Activated CD8-positive, alpha-beta T cell treated with anti-CD3 and anti-CD28 coated beads, Interleukin-2, amount 10 ng/mL, durations not matched to agents 7 days and 5 days (primary cell): ENCODE measurements at regions of chr11 and their contacts with region 1.

Region 1: GRCh38 chr11:73350908-73351636 is 25.1 kb upstream of the RELT start:
- DNase-seq: peak; percentile 73
- ATAC-seq: peak; percentile 66
- H3K4me3 Mint-ChIP-seq: no peak overlapping the region
- H3K27ac Mint-ChIP-seq: no peak overlapping the region
- H3K4me1 Mint-ChIP-seq: peaks cover 14% of the 10 kb centered on the region
- H3K27me3 Mint-ChIP-seq: peaks cover 2% of the 10 kb centered on the region

Region 2: DNA sequence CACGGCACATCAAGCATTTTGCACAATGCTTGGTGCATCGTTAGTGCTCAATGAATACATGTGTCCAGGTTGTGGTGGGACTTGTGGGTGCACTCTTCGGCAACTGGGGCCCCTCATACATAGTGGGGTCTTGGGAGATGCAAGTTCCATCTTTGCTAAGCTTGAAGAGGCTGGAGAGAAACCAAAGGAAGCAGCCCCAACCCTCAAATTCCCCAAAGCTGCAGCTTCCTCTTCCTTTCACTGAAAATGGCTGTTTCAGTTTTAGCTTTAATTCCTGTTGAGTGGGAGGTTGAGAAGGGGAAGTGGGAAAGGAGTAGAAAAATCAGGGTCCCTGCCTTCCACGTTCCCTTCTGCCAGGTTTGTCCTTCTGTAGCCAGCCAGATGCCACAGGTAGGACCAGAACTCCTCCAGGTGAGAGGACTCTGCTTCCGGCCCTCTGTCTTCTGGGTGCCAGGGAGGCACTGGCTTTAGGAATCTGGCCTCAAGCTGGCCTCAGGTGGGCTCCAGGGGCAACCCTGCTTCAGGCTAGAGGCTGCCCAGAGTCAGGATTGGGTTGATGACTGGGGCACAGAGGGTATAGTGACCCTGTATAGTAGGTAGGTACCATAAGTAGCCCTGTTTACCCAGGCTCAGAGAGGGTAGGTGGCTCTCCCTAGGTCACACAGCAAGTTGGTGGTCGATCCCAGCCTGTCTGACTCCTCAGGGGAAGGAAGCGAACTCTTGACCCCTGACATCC is 62.8 kb before region 1 on chr11:
- CTCF ChIA-PET with region 1: no interaction called
- POLR2A ChIA-PET with region 1: no interaction called
- DNase-seq: no peak
- ATAC-seq: no peak
- H3K4me3 Mint-ChIP-seq: no peak overlapping the region
- H3K27ac Mint-ChIP-seq: peak overlapping the region; percentile 12
- H3K4me1 Mint-ChIP-seq: peaks cover 23% of the 10 kb centered on the region
- H3K27me3 Mint-ChIP-seq: peaks cover 8% of the 10 kb centered on the region

Region 3: DNA sequence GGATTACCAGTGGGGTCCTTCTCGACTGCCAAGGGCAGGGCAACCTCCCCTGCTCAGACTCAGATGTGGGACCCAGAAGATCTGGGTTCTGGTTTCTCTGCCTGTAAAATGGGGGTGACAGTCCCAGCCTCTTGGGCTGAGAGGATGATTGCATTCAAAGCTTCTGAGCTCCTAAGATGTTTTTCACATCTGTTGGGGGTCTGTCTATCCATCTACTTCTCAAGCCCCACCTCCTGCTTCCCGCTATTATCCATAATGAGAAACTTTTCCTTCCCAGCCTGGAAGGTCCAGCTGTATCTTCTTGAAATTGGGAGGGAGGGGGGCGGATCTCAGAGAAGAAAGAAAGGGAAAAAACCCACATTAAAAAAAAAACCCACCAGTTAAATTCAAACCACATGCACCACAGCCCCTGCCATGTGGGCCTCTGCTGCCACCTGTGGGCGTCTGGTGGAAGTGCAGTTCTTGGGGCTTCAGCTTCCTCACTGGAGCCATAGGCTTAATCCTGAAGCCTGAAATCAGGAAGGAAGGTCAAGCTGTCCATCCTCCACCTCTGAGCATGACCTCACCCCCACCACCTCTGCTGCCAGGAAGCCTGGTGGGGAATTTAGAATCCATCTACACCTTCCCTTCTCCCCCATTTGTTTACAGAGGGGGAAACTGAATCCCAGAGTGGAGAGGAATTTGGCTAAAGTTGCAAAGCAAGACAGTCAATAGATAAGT is 15.7 kb before region 1 on chr11:
- CTCF ChIA-PET with region 1: interaction called, 62 read pairs
- POLR2A ChIA-PET with region 1: no interaction called
- DNase-seq: peak; percentile 82
- ATAC-seq: peak; percentile 63
- H3K4me3 Mint-ChIP-seq: no peak overlapping the region
- H3K27ac Mint-ChIP-seq: no peak overlapping the region
- H3K4me1 Mint-ChIP-seq: peaks cover 11% of the 10 kb centered on the region
- H3K27me3 Mint-ChIP-seq: peaks cover under 1% of the 10 kb centered on the region

Region 4: DNA sequence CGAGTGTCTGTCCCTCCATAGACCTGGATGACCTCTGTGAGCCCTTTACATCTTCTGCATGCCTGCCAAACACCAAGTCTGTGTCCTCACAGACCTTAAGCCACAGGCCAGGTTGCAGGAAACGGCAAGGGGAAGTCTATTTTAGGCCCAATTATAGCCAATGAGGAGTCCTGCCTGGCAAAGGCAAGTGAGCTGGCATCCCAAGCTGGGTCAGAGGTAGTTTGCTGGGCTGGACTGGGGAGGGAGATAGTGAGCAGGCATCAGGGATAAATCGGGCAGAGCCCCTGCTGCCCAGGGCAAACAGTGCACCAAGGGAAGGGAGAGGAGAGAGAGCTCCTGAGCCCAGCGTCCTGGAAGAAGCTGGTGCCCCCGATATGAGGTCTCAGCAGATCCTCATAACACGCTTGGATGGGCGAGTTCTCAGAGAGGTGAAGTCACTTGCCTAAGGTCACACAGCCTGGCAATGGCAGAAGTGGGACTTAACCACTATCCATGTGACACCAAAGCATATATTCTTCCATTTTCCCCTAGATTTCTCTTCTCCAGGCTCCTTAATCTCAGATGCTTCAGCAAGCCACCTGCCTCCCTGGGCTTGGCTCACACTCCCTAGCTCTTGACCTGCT is 21.4 kb after region 1 on chr11:
- CTCF ChIA-PET with region 1: interaction called, 59 read pairs
- POLR2A ChIA-PET with region 1: interaction called, 5 read pairs
- DNase-seq: no peak
- ATAC-seq: no peak
- H3K4me3 Mint-ChIP-seq: no peak overlapping the region
- H3K27ac Mint-ChIP-seq: peak overlapping the region; percentile 58
- H3K4me1 Mint-ChIP-seq: peaks cover 36% of the 10 kb centered on the region
- H3K27me3 Mint-ChIP-seq: no peaks in the 10 kb centered on the region

Region 5: DNA sequence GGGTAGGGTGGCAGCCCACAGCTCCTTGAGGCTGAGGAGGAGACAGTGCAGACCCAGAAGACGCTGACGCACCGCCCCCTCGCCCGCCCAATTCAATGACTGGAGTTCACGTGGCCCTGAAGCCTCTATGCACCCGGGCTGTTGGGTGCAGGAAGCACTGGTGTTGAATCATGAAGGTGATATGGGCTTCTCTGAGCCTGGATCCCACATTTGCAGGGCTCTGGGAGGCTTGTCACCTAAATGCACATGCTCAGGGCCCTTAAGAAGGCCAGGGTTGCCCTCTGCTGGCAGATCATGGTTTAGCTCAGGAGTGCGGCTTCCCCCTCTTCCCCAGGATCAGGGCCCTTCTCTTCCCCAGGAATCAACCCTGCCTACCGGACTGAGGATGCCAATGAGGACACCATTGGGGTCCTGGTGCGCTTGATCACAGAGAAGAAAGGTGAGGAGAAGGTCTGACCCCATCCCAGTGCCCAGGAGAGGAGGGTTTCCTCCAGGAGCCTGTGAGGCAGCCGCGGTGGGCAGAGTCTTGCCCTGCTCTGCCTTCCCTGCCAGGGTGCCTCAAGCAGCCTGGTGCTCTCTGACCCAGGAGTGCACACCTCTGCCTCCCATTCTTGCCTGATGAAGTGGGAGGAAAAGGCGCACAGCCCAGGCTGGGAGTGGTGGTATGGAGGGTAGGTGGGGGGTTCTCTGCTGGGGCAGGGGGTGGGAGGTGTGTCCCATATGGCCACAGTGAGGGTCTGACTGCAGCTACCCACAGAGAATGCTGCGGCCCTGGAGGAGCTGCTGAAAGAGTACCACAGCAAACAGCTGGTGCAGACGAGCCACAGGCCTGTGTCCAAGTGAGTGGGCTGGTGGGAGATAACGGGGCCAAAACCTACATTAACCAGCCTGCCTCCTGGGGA is 42.7 kb after region 1 on chr11:
- CTCF ChIA-PET with region 1: interaction called, 101 read pairs
- POLR2A ChIA-PET with region 1: interaction called, 4 read pairs
- DNase-seq: peak; percentile 80
- ATAC-seq: peak; percentile 76
- H3K4me3 Mint-ChIP-seq: no peak overlapping the region
- H3K27ac Mint-ChIP-seq: peak overlapping the region; percentile 69
- H3K4me1 Mint-ChIP-seq: peaks cover 17% of the 10 kb centered on the region
- H3K27me3 Mint-ChIP-seq: no peaks in the 10 kb centered on the region

Region 6: DNA sequence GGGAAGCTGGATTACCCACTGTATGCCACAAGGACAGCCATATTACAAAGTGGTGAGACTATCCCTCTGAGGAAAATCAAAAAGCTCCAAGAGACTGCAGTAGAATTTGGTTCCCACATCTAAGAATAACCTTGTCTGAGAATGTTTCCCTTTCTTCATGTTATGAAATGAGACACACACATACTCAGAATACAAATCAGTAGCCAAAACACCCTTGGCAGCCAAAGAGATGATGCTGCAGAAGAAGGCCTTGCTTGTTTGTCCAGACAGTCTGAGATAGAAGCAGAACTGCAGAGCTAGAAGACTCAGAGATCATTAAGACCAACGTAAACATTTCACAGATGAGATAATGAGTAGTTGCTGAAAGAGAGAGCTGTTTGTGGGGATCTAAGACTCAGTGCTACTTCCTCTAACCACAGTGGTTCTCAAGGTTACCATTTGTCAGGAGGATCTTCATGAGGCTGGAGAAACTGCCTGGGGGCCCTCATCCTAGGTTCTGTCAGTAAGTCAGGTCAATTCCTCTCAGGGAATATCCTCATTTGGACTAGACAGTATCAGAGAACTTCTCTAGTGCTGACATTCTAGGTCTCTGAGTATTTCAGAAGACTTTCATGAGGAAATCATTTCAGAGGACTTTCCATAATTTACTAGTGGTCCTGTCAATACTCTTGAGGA is 64.0 kb after region 1 on chr11:
- CTCF ChIA-PET with region 1: interaction called, 17 read pairs
- POLR2A ChIA-PET with region 1: no interaction called
- DNase-seq: no peak
- ATAC-seq: peak; percentile 47
- H3K4me3 Mint-ChIP-seq: no peak overlapping the region
- H3K27ac Mint-ChIP-seq: peak overlapping the region; percentile 50
- H3K4me1 Mint-ChIP-seq: peaks cover 12% of the 10 kb centered on the region
- H3K27me3 Mint-ChIP-seq: no peaks in the 10 kb centered on the region